ENCODE measurements at regions of chr1 and their contacts with region 1.

Region 1: DNA sequence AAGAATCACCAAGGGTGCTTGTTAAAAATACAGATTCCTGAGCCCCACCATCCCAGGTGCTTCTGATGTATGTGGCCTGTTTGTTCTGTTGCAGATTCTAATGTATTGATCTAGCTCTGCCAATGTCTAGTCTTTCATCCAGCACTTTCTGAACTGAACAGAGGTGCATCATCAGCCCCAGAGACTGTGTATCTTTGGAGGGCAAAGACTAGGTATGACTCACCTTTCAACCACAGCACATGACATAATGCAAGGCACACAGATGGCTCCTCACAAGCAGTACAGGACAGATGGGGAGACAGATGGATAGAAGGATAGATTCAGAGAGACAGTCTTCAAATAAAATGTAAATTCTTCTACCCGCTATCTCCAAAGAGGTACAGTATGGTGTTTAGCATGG is 32.3 kb downstream of the CD58 start:
- DNase-seq: peak; percentile 72
- H3K4me3 Mint-ChIP-seq: no peak overlapping the region
- H3K27ac Mint-ChIP-seq: peak overlapping the region; percentile 67
- H3K4me1 Mint-ChIP-seq: peaks cover 35% of the 10 kb centered on the region
- H3K27me3 Mint-ChIP-seq: no peaks in the 10 kb centered on the region
- CTCF ChIP-seq: no peak

Region 2: GRCh38 chr1:116321766-116322175 is 216.8 kb before region 1 on chr1:
- CTCF ChIA-PET with region 1: no interaction called
- POLR2A ChIA-PET with region 1: no interaction called
- intact Hi-C with region 1: no loop called
- DNase-seq: no peak
- H3K4me3 Mint-ChIP-seq: no peak overlapping the region
- H3K27ac Mint-ChIP-seq: no peak overlapping the region
- H3K4me1 Mint-ChIP-seq: peaks cover 12% of the 10 kb centered on the region
- H3K27me3 Mint-ChIP-seq: no peaks in the 10 kb centered on the region
- CTCF ChIP-seq: no peak

Region 3: GRCh38 chr1:116556289-116557006 is 17.9 kb after region 1 on chr1:
- CTCF ChIA-PET with region 1: interaction called, 4 read pairs
- POLR2A ChIA-PET with region 1: interaction called, 27 read pairs
- intact Hi-C with region 1: no loop called
- DNase-seq: peak; percentile 99
- H3K4me3 Mint-ChIP-seq: peak overlapping the region; percentile 11
- H3K27ac Mint-ChIP-seq: peak overlapping the region; percentile 84
- H3K4me1 Mint-ChIP-seq: peaks cover 25% of the 10 kb centered on the region
- H3K27me3 Mint-ChIP-seq: no peaks in the 10 kb centered on the region
- CTCF ChIP-seq: no peak

Measured in MCF 10A (cell line).